Caco-2 (cell line): ENCODE measurements at regions of chr17 and their contacts with region 1.

Region 1: GRCh38 chr17:46780003-46780373 is 38.5 kb downstream of the WNT3 start:
- DNase-seq: no peak
- H3K4me3 ChIP-seq: no peak overlapping the region
- H3K4me3 Mint-ChIP-seq: no peak overlapping the region
- H3K27ac Mint-ChIP-seq: no peak overlapping the region
- H3K4me1 ChIP-seq: peaks cover under 1% of the 10 kb centered on the region; the same call in 1 of the 2 replicates
- H3K4me1 Mint-ChIP-seq: peaks cover 7% of the 10 kb centered on the region
- H3K27me3 ChIP-seq: no peaks in the 10 kb centered on the region
- H3K27me3 Mint-ChIP-seq: no peaks in the 10 kb centered on the region
- CTCF ChIP-seq: no peak

Region 2: GRCh38 chr17:46745376-46745775 is 34.6 kb before region 1 on chr17:
- CTCF ChIA-PET with region 1: no interaction called
- POLR2A ChIA-PET with region 1: no interaction called
- intact Hi-C with region 1: loop called (anchors 2 kb)
- DNase-seq: no peak
- H3K4me3 ChIP-seq: no peak overlapping the region
- H3K4me3 Mint-ChIP-seq: no peak overlapping the region
- H3K27ac Mint-ChIP-seq: no peak overlapping the region
- H3K4me1 ChIP-seq: no peaks in the 10 kb centered on the region
- H3K4me1 Mint-ChIP-seq: no peaks in the 10 kb centered on the region
- H3K27me3 ChIP-seq: no peaks in the 10 kb centered on the region
- H3K27me3 Mint-ChIP-seq: no peaks in the 10 kb centered on the region
- CTCF ChIP-seq: no peak

Region 3: GRCh38 chr17:46822388-46822921 is 42.5 kb after region 1 on chr17:
- CTCF ChIA-PET with region 1: no interaction called
- POLR2A ChIA-PET with region 1: no interaction called
- intact Hi-C with region 1: no loop called
- DNase-seq: peak in 1 of 2 experiments; percentile 50
- H3K4me3 ChIP-seq: no peak overlapping the region
- H3K4me3 Mint-ChIP-seq: no peak overlapping the region
- H3K27ac Mint-ChIP-seq: no peak overlapping the region
- H3K4me1 ChIP-seq: peaks cover 8% of the 10 kb centered on the region; the same call in 1 of the 2 replicates
- H3K4me1 Mint-ChIP-seq: no peaks in the 10 kb centered on the region
- H3K27me3 ChIP-seq: no peaks in the 10 kb centered on the region
- H3K27me3 Mint-ChIP-seq: no peaks in the 10 kb centered on the region
- CTCF ChIP-seq: peak; percentile 48 to 61